ENCODE measurements at regions of chr9 and their contacts with region 1.

Region 1: GRCh38 chr9:122016744-122017143 is 76.4 kb downstream of the TTLL11 start:
- DNase-seq: peak; percentile 60
- H3K4me3 ChIP-seq: no peak overlapping the region
- H3K27ac ChIP-seq: no peak overlapping the region
- H3K4me1 ChIP-seq: peaks cover 9% of the 10 kb centered on the region
- CTCF ChIP-seq: peak; percentile 90

Region 2: GRCh38 chr9:121545875-121546423 is 470.8 kb before region 1 on chr9:
- CTCF ChIA-PET with region 1: no interaction called
- POLR2A ChIA-PET with region 1: no interaction called
- intact Hi-C with region 1: loop called (anchors 5 kb)
- DNase-seq: peak; percentile 78
- H3K4me3 ChIP-seq: no peak overlapping the region
- H3K27ac ChIP-seq: no peak overlapping the region
- H3K4me1 ChIP-seq: peaks cover 4% of the 10 kb centered on the region
- CTCF ChIP-seq: peak; percentile 86

Region 3: GRCh38 chr9:121598965-121599871 is 417.5 kb before region 1 on chr9:
- CTCF ChIA-PET with region 1: no interaction called
- POLR2A ChIA-PET with region 1: no interaction called
- intact Hi-C with region 1: no loop called
- DNase-seq: no peak
- H3K4me3 ChIP-seq: no peak overlapping the region
- H3K27ac ChIP-seq: no peak overlapping the region
- H3K4me1 ChIP-seq: no peaks in the 10 kb centered on the region
- CTCF ChIP-seq: no peak

Region 4: DNA sequence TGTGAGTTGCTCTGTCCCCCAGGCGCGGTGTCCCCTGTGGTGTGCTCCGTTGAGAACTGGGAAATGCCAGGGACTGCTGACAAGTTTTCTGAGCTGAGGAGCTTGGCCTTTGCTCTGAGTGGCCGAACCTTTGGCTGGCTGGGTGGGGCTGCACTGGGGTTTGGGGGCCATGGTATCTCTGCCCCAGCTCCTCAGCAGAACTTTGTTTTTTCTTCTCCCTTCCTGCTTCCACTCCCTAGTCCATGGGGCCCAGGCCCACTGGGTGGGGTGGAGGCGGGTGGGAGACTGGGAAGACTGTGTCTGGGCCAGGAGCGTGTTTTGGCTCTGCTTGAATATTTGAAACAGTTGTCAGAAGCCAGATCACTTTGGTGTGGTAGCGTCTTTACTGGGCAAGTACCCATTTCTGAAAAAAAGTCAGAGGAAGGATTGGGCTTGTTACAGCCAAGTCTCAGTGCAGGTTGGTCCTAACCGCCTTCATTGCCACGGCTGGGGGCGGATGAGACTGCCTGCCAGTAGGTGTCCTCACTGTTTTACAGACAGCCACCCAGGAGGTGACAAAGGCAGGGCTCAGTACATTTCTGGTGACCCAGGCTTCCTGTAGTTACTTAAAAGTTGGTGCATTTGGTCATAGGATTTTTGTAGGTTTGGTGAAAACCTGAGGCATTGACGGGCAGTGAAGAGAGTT is 272.6 kb before region 1 on chr9:
- CTCF ChIA-PET with region 1: no interaction called
- POLR2A ChIA-PET with region 1: no interaction called
- intact Hi-C with region 1: loop called (anchors 1 kb)
- DNase-seq: peak; percentile 89
- H3K4me3 ChIP-seq: no peak overlapping the region
- H3K27ac ChIP-seq: no peak overlapping the region
- H3K4me1 ChIP-seq: peaks cover 54% of the 10 kb centered on the region
- CTCF ChIP-seq: peak; percentile 97

Measured in OCI-LY7 (cell line).